ENCODE measurements at regions of chr15 and their contacts with region 1.

Region 1: GRCh38 chr15:82540055-82540983 is at the start of gene RPS17:
- DNase-seq: peak; percentile 94
- H3K4me3 ChIP-seq: peak within 1 kb of the TSS; percentile 73 to 87 (median 86)
- H3K27ac ChIP-seq: peak within 1 kb of the TSS; percentile 56
- H3K4me1 ChIP-seq: peaks cover 17% of the 10 kb centered on the region
- H3K27me3 ChIP-seq: peaks cover 4 to 11% of the 10 kb centered on the region in 2 experiments
- CTCF ChIP-seq: peak; percentile 100
- POLR2A ChIP-seq: peak; percentile 99
- total RNA-seq, gene RPS17: 1,599 and 1,690 TPM in 2 replicates

Region 2: DNA sequence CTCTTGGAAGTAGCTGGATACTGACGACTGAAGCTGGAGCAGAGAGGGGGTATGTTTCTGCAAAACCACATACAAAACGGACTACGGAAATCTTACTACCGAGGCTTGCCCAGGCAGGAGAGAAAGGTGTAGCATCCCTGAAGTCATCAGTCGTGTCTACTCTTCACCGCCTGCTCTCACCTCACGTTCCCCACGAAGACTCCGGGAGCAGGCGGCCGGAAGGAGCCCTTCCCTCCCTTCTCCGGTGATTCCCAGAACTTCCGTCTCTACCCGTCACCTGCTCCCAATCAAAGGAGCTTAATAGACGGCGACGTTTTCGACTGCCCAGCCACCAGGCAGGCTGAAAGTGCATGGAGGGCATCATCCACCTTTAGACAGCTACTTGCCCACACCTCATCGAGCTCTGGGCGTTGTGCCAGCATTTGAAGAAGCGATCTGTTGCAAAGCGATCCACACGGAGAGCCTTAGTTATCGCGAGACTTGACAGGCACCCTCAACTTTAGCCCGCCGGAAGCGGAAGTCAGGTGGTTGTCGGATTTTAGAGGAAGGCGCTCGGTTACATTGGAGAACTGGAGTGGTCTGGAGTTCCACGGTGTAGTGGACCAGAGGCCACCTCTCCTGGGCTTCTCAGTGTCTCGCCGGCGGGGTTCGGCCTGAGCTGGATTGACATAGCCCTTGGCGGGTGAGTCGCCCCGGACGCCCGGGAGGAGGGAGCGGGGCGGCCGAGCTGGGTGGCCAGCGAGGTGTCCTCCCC is 445.5 kb after region 1 on chr15 and contains the start of gene RAMAC:
- CTCF ChIA-PET with region 1: interaction called, 3 read pairs
- POLR2A ChIA-PET with region 1: no interaction called
- dilution Hi-C with region 1: no loop called
- intact Hi-C with region 1: loop called (anchors 5 kb)
- DNase-seq: peak; percentile 92
- H3K4me3 ChIP-seq: peak within 1 kb of the TSS; percentile 65 to 88 (median 87)
- H3K27ac ChIP-seq: peak within 1 kb of the TSS; percentile 28
- H3K4me1 ChIP-seq: peaks cover 4% of the 10 kb centered on the region
- H3K27me3 ChIP-seq: no peaks in the 10 kb centered on the region
- CTCF ChIP-seq: no peak
- POLR2A ChIP-seq: peak; percentile 60
- total RNA-seq, gene RAMAC: 14.1 and 15.2 TPM in 2 replicates